Vagina (tissue), 2 donors: ENCODE measurements at regions of chr17 and their contacts with region 1.

Region 1: GRCh38 chr17:79082311-79083190 is 7.9 kb downstream of the ENGASE start:
- DNase-seq: no peak
- H3K4me3 ChIP-seq: no peak overlapping the region
- H3K27ac ChIP-seq: no peak overlapping the region
- H3K4me1 ChIP-seq: no peaks in the 10 kb centered on the region
- H3K27me3 ChIP-seq: no peaks in the 10 kb centered on the region
- CTCF ChIP-seq: peak in 2 of 3 experiments; percentile 55
- POLR2A ChIP-seq: no peak

Region 2: DNA sequence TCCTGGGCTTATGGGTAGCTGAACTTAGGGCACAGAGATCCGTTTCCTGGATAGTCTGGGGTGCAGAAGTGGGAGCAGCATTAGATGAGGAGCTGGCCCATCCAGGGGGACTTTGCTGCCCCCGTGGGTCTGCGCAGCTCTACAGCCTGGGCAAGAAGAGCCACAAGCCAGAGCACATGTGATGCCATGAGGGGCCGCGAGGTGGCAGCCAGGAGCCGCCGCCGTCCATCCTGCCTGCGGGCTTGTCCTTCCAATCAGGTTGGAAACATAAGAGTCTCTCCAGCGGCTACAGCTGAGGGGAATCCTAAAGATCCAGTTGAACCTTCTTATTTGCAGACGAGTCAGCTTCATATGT is 36.7 kb before region 1 on chr17:
- intact Hi-C with region 1: loop called (anchors 5 kb)
- DNase-seq: no peak
- H3K4me3 ChIP-seq: no peak overlapping the region
- H3K27ac ChIP-seq: peak overlapping the region; percentile 68
- H3K4me1 ChIP-seq: peaks cover 20% of the 10 kb centered on the region
- H3K27me3 ChIP-seq: no peaks in the 10 kb centered on the region
- CTCF ChIP-seq: peak; percentile 68 to 83 (median 81)
- POLR2A ChIP-seq: no peak

Region 3: GRCh38 chr17:79340333-79341221 is 258.0 kb after region 1 on chr17:
- intact Hi-C with region 1: no loop called
- DNase-seq: no peak
- H3K4me3 ChIP-seq: no peak overlapping the region
- H3K27ac ChIP-seq: no peak overlapping the region
- H3K4me1 ChIP-seq: peaks cover 4% of the 10 kb centered on the region
- H3K27me3 ChIP-seq: no peaks in the 10 kb centered on the region
- CTCF ChIP-seq: no peak
- POLR2A ChIP-seq: no peak